AG04449 (cell line): ENCODE measurements at regions of chr1 and their contacts with region 1.

Region 1: DNA sequence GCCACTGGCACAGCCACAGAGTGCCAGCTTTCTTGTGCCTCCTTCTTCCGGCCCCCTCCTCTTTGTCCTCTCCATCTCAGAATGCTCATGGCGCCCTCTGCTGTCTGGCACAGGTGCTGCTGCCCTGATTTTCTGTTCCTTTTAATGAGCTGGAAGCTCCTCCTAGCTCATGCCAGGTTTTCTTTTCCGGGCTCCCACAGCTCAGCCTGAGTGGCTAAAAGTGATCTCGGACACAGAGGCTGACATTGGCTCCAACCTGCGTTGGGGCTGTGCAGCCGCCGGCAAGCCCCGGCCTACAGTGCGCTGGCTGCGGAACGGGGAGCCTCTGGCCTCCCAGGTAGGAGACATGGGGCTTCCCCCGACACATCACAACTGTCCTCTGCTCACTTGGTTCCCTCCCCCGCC is 18.7 kb downstream of the CNTN2 start:
- DNase-seq: no peak
- H3K4me3 ChIP-seq: no peak overlapping the region
- CTCF ChIP-seq: peak; percentile 90

Region 2: DNA sequence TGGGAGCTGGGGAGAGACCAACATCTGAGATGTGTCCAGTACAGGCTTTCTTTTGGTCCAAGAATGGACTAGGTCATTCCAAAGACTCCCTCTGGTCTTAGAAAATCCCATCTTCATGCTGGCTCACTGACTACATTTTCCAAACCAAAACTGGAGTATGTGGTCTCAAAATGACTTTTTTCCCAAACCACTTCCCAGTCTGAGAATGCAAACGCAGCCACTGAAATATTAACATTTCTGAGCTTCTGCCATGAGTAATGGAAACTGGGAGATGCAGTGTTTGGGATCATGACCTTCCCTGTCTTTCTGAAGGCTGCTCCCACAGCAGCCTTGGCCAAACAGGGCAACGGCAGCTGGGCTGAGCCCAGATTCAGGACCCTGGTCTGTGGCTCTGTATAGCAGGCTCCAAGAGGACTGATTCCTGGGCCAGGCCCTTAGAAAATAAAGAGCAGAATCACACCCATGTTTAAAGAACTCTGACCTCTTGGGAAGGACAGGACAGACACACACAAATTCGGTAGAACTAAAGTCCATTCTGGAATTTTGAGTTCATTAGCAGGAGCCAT is 80.7 kb before region 1 on chr1:
- CTCF ChIA-PET with region 1: interaction called, 153 read pairs
- POLR2A ChIA-PET with region 1: no interaction called
- DNase-seq: no peak
- H3K4me3 ChIP-seq: no peak overlapping the region
- CTCF ChIP-seq: no peak

Region 3: DNA sequence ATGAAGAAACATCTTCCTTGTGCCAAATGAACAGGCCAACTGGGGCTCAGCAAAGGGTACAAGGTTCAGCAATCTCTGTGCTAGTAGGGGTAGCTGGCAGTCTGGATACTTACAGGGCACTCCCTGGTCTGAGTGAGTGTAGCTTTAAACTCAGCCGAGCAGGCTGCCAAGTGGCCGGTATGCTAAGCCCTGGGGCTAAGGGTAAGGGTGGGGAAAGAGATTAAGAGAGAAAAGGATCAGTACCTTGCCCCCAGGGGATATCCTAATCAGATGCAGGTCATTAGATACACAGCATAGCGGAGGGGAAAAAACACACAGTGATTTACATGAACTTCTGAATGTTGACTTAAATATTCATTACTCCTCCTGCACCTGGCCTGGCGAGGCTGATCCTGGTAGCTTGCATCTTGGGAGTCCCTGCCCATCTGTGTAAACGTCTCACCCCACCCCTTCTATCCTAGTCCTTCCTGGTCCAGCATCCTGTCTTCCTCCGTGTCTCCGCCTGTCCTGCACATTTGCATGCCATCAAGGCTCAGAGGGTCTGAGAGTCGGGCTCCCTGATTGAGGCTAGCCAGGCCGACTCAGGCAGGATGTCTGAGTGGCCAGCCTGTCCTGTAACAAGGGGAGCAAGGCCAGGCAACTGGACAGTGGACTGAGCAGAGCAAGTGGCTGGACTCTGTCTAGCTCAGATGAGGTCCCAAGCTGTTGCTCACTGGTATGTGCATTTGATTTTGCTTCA is 58.1 kb before region 1 on chr1:
- CTCF ChIA-PET with region 1: interaction called, 65 read pairs
- POLR2A ChIA-PET with region 1: no interaction called
- DNase-seq: no peak
- H3K4me3 ChIP-seq: no peak overlapping the region
- CTCF ChIP-seq: no peak

Region 4: GRCh38 chr1:205032508-205032907 is 29.2 kb before region 1 on chr1:
- CTCF ChIA-PET with region 1: interaction called, 47 read pairs
- POLR2A ChIA-PET with region 1: interaction called, 3 read pairs
- DNase-seq: no peak
- H3K4me3 ChIP-seq: no peak overlapping the region
- CTCF ChIP-seq: no peak

Region 5: GRCh38 chr1:205077158-205077933 is 15.7 kb after region 1 on chr1:
- CTCF ChIA-PET with region 1: interaction called, 103 read pairs
- POLR2A ChIA-PET with region 1: no interaction called
- DNase-seq: no peak
- H3K4me3 ChIP-seq: no peak overlapping the region
- CTCF ChIP-seq: no peak

Region 6: DNA sequence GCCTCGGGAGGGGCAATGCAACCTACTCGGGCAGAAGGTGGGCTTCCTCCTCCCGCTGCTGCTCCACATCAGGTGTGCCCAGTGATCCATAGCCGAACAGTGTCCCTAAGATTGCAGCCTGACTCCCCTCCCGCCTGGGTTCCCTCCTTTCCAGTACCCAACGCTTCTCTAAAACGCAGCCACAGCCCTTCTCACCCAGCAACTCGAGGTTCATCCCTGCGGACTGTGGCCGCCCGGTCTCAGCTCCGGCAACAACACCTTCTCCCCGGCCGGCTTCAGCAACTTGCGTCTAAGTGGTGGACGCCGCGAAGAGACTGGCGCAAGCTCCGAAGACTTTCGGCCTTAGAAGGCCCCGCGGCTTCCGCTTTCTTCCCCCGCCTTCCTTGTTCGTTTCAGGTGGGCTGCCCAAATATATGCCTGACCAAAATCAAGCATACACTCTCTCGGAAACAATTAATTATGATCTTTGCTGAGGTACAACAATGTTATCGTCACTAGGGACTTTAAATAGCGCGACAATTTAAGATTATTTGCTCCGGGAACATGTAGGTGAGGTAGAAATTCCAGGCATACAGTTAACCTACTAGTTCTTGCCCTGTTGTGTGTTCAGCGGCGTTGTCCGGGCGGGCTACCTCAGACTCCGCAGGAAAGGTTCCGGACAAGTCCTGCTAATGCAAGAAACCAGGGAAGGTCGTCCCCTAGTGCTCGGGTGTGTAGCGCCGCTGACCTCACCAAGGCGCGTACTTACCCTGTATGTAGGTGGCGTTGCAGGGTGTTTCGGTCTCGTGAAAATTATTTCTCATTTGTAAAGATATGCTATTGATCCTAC is 60.2 kb after region 1 on chr1 and contains the start of gene RBBP5:
- CTCF ChIA-PET with region 1: interaction called, 11 read pairs
- POLR2A ChIA-PET with region 1: no interaction called
- DNase-seq: peak; percentile 94
- H3K4me3 ChIP-seq: peak within 1 kb of the TSS; percentile 99
- CTCF ChIP-seq: peak; percentile 88